Left ventricle myocardium inferior (tissue), 1 donor: ENCODE measurements at regions of chr18 and their contacts with region 1.

Region 1: GRCh38 chr18:55343396-55344073 is 244.5 kb downstream of the TCF4 start:
- DNase-seq: no peak
- H3K4me3 ChIP-seq: no peak overlapping the region
- H3K27ac ChIP-seq: peak overlapping the region; percentile 38
- H3K4me1 ChIP-seq: peaks cover 49% of the 10 kb centered on the region
- H3K27me3 ChIP-seq: no peaks in the 10 kb centered on the region
- CTCF ChIP-seq: peak; percentile 71

Region 2: DNA sequence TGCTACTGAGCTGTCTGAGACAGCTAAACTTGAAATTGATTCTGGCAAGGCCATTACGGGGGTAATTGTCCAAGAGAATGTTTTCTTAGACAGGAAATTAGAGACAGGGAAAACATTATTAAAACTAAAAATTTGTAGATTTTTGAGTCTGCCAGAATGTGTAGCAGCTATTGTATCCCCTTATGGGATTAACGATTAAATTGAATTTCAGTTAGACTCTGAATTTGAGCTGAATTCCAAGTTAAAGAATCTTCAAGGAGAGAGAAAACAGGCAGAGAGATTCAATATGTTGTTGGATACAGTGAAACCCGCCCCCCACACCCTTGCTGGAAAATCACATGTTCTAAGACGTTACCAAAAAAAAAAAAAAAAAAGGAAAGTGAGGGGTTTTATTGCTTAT is 351.6 kb before region 1 on chr18:
- intact Hi-C with region 1: no loop called
- DNase-seq: no peak
- H3K4me3 ChIP-seq: no peak overlapping the region
- H3K27ac ChIP-seq: no peak overlapping the region
- H3K4me1 ChIP-seq: no peaks in the 10 kb centered on the region
- H3K27me3 ChIP-seq: no peaks in the 10 kb centered on the region
- CTCF ChIP-seq: no peak

Region 3: GRCh38 chr18:55220523-55220922 is 123.0 kb before region 1 on chr18:
- intact Hi-C with region 1: no loop called
- DNase-seq: no peak
- H3K4me3 ChIP-seq: no peak overlapping the region
- H3K27ac ChIP-seq: peak overlapping the region; percentile 61
- H3K4me1 ChIP-seq: peaks cover 16% of the 10 kb centered on the region
- H3K27me3 ChIP-seq: no peaks in the 10 kb centered on the region
- CTCF ChIP-seq: no peak

Region 4: GRCh38 chr18:55405893-55406406 is 62.4 kb after region 1 on chr18:
- intact Hi-C with region 1: loop called (anchors 10 kb)
- DNase-seq: peak; percentile 87
- H3K4me3 ChIP-seq: peak overlapping the region; percentile 24
- H3K27ac ChIP-seq: peak overlapping the region; percentile 81
- H3K4me1 ChIP-seq: peaks cover 49% of the 10 kb centered on the region
- H3K27me3 ChIP-seq: no peaks in the 10 kb centered on the region
- CTCF ChIP-seq: peak; percentile 42

Region 5: DNA sequence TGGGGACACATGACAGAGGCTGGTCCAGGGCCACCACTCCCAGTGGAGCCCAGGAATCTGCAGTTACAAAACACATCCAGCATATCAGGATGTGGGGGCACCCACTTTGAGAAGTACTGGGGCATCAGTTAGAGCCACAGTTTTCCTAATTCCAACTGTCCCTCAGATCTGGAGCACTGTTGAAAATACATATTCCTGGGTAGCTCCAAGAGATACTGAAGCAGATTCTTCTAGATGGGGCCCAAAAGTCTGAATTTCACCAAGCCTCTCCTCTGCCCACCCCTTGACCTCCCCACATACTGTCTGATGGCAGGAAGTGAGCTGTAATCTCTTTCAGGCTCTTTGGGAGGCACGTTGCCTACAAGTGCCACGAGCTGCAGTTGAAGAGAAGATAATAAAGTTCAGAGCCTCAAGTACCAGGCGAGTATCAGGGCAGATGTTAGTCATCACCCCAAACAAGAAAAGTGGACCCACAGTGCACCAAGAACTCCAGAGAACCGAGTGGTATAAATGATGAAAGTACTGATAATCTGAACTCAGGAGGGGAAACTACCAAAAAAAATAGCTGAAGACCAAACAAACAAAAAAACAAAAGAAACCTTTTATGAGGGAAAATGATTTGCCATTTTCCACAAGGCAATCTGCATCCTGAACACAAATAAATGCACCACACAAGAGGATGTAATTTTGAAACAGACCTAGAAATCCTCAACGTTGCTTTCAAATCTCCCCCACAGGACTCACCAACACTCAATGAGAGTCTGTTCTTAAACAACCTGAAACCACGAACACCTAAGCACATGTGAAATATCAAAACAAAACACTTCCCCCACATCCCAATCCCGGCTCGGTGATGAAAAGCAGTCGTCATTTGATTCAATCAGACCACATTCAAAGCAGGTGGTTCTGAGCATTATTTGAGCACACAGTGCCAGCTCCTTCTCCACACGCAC is 145.8 kb after region 1 on chr18:
- intact Hi-C with region 1: no loop called
- DNase-seq: no peak
- H3K4me3 ChIP-seq: no peak overlapping the region
- H3K27ac ChIP-seq: peak overlapping the region; percentile 4
- H3K4me1 ChIP-seq: peaks cover 54% of the 10 kb centered on the region
- H3K27me3 ChIP-seq: no peaks in the 10 kb centered on the region
- CTCF ChIP-seq: no peak

Region 6: GRCh38 chr18:55529581-55529980 is 186.0 kb after region 1 on chr18:
- intact Hi-C with region 1: no loop called
- DNase-seq: no peak
- H3K4me3 ChIP-seq: no peak overlapping the region
- H3K27ac ChIP-seq: no peak overlapping the region
- H3K4me1 ChIP-seq: peaks cover 27% of the 10 kb centered on the region
- H3K27me3 ChIP-seq: no peaks in the 10 kb centered on the region
- CTCF ChIP-seq: no peak

Region 7: DNA sequence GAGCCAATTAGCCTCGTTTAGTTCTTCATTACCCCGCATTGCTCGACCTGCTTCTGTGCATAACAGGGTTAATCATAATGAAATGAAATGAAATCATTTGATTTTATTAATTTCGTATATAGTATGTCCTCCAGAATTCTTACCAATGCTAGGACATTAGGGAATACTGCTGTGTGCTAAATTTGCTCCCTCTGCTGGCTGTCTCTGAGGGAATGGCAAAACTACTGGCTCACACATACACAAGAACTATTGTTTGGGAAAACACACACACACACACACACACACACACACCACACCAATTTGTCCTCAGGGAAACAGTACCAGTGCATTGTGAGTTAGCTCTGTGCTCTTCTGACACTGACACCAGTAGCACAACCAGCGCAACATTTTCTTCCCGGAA is 517.7 kb after region 1 on chr18:
- intact Hi-C with region 1: loop called (anchors 10 kb)
- DNase-seq: no peak
- H3K4me3 ChIP-seq: no peak overlapping the region
- H3K27ac ChIP-seq: no peak overlapping the region
- H3K4me1 ChIP-seq: peaks cover 25% of the 10 kb centered on the region
- H3K27me3 ChIP-seq: no peaks in the 10 kb centered on the region
- CTCF ChIP-seq: peak; percentile 58